Activated naive CD4-positive, alpha-beta T cell treated with anti-CD3 and anti-CD28 coated beads for 36 hours (primary cell): ENCODE measurements at regions of chr1 and their contacts with region 1.

Region 1: DNA sequence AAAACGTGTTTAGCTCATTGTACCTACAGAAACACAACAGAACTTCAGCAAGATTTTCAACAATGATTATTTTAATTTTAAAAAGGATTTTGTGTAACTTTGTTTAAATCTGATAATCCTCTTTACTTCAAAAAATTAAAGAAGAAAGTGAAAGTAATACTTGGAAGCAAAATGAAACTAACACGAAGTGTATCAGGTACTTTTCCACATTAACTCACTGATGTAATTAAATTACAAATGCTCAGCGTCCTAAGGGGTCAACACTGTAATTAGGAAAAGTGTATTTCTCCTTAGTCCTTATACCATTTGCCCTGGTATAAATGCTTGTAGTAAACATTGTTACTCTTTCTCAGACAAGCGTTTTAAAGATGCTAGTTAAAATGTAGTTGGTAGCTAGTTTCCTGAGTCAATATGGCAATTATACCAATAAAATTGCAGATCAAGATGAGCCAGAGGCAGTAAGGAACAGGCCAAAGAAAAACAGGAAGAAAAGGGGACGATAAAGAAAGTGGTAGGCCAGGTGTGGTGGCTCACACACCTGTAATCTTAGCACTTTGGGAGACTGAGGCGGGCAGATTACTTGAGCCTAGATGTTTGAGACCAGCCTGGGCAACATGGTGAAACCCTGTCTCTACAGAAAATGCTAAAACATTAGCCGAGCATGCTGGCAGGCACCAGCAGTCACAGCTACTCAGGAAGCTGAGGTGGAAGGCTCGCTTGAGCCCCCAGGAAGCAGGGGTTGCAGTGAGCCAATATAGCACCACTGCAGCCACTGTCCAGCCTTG is 553.0 kb downstream of the SMYD3 start:
- DNase-seq: peak; percentile 17
- H3K4me3 Mint-ChIP-seq: peak overlapping the region; percentile 54
- H3K27ac Mint-ChIP-seq: peak overlapping the region; percentile 87
- H3K4me1 Mint-ChIP-seq: peaks cover 27% of the 10 kb centered on the region
- H3K27me3 Mint-ChIP-seq: no peaks in the 10 kb centered on the region

Region 2: GRCh38 chr1:244835276-244836134 is 1118.6 kb before region 1 on chr1 and contains the start of gene COX20:
- CTCF ChIA-PET with region 1: no interaction called
- intact Hi-C with region 1: loop called (anchors 10 kb)
- DNase-seq: peak; percentile 85
- H3K4me3 Mint-ChIP-seq: peak within 1 kb of the TSS; percentile 94
- H3K27ac Mint-ChIP-seq: peak within 1 kb of the TSS; percentile 99
- H3K4me1 Mint-ChIP-seq: peaks cover 38% of the 10 kb centered on the region
- H3K27me3 Mint-ChIP-seq: no peaks in the 10 kb centered on the region
- total RNA-seq, gene COX20: 21.4 to 24.2 TPM

Region 3: DNA sequence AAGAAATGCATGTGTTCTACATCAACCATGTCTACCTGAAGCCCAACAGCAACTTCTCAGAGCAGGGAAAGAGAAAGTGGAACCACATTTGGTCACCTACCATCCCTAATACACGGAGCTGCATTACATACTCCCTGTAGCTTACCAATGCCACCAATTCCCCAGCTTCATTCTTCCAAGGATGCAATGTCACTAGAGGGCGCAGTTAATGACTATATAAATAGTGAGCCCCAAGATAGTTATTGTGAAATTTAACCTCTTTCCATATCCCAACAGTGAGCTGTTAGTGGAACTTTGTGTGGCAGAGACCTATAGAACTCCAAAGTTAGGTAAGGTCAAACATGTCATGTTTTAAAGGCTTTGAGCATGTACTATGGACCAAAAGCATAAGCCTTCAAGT is 65.3 kb before region 1 on chr1:
- CTCF ChIA-PET with region 1: no interaction called
- intact Hi-C with region 1: loop called (anchors 2 kb)
- DNase-seq: peak; percentile 28
- H3K4me3 Mint-ChIP-seq: no peak overlapping the region
- H3K27ac Mint-ChIP-seq: no peak overlapping the region
- H3K4me1 Mint-ChIP-seq: no peaks in the 10 kb centered on the region
- H3K27me3 Mint-ChIP-seq: no peaks in the 10 kb centered on the region

Region 4: DNA sequence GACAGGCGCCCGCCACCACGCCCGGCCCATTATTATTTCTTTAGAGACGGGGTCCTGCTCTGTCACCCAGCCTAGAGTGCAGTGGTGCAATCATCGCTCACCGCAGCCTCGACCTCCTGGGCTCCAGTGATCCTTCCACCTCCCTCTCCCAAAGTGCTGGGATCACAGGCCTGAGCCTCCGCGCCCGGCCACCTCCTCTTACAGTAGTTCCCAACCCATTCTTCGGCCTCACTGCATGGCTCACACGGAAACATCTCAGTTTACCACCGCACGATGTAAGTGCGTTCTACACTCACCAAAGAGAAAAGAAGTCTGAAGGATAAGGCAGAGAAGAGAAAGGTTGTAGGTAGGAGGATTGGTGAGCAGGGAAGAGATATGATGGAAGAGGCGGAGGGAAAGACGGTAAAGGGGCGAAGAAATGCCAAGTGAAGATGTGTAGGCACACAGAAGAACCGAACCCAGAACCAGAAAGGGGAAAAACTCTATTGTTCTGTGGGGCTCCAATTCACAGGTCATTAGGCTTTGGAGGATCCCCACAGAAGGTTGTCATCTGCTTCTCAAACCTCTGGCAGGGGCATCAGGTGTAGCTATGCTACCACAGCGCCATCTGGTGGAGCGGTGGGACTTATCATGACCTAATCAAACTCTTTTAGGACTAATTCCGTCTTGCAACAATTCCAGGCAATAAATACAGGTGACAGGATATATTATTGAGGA is 48.8 kb after region 1 on chr1:
- CTCF ChIA-PET with region 1: no interaction called
- intact Hi-C with region 1: loop called (anchors 2 kb)
- DNase-seq: peak; percentile 93
- H3K4me3 Mint-ChIP-seq: no peak overlapping the region
- H3K27ac Mint-ChIP-seq: no peak overlapping the region
- H3K4me1 Mint-ChIP-seq: no peaks in the 10 kb centered on the region
- H3K27me3 Mint-ChIP-seq: no peaks in the 10 kb centered on the region

Region 5: DNA sequence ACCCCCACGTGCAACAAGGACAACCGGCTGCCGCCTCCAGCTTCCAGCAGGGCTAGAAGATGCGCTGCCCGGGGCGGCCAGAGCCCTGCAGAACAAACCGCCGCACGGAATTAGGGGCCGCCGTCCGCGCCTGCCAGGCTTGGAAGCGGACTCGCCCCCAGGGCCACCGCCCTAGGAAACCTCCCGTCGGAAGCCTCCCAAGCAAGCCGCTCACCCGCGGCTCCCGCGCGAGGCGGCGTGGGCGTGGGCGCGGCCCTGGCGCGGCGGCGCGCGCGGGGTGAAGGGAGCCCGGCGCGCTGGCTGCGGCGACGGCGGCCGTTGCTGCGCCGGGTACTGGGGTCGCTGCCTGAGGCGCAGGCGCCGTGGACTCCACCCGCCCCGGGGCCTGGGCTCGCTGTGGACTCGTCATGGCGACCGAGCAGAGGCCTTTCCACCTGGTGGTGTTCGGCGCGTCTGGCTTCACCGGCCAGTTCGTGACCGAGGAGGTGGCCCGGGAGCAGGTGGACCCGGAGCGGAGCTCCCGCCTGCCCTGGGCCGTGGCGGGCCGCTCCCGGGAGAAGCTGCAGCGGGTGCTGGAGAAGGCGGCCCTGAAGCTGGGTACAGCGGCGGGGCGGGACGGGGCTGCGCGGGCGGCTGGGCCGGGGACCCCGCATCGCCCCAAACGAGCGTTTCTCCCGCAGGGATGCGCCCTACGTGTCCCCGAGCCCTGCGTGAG is 770.1 kb after region 1 on chr1 and contains the start of gene SCCPDH:
- CTCF ChIA-PET with region 1: no interaction called
- intact Hi-C with region 1: loop called (anchors 10 kb)
- DNase-seq: peak; percentile 64
- H3K4me3 Mint-ChIP-seq: peak within 1 kb of the TSS; percentile 88
- H3K27ac Mint-ChIP-seq: peak within 1 kb of the TSS; percentile 66
- H3K4me1 Mint-ChIP-seq: peaks cover 10% of the 10 kb centered on the region
- H3K27me3 Mint-ChIP-seq: no peaks in the 10 kb centered on the region
- total RNA-seq, gene SCCPDH: 23.8 to 24.3 TPM